ENCODE measurements at regions of chr16 and their contacts with region 1.

Region 1: DNA sequence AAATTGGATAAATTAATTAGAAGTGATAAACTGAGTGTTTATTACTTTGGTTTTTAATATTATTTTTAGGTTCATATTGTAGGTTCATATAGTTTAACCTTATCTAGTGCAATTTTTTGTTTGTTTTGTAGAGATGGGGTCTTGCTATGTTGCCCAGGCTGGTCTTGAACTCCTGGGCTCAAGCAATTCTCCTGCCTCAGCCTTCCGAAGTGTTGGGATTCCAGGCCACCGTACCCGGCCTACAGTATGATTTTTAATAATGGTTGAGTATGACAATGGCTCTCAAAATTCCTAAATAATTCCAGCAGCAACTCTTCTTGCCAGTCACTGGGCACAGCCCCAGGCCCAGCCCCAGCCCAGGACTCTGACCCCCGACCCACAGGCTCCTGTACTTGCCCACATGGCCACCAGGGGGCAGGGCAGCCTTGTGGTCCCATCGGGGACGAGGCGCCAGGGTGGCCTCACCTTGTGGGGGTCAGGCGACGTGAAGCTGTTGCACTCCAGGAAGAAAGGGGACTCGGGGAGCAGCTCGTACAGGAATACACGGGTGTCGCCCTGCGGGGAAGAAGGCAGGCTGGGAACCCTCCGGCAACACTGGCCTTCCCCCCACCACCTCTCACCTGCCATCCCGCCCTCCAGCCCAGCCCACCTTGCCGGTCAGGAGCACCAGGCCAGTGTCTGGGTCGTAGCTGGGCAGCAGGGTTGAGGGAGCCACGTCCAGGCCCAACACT is 7.9 kb upstream of the PAM16 start:
- DNase-seq: no peak
- H3K4me3 ChIP-seq: no peak overlapping the region
- H3K27me3 ChIP-seq: no peaks in the 10 kb centered on the region
- CTCF ChIP-seq: peak; percentile 96

Region 2: GRCh38 chr16:4371357-4372000 is 12.5 kb after region 1 on chr16 and contains the start of gene VASN:
- CTCF ChIA-PET with region 1: interaction called, 35 read pairs
- POLR2A ChIA-PET with region 1: interaction called, 3 read pairs
- DNase-seq: no peak
- H3K4me3 ChIP-seq: peak within 1 kb of the TSS; percentile 97
- H3K27me3 ChIP-seq: no peaks in the 10 kb centered on the region
- CTCF ChIP-seq: no peak
- polyA plus RNA-seq, gene VASN: 30.0 and 71.6 TPM in 2 replicates